ENCODE measurements at regions of chr3 and their contacts with region 1.

Region 1: GRCh38 chr3:157081681-157082210 is 78.2 kb downstream of the CCNL1 start:
- DNase-seq: peak; percentile 70
- CTCF ChIP-seq: peak; percentile 92

Region 2: GRCh38 chr3:156535162-156535627 is 546.6 kb before region 1 on chr3:
- in situ Hi-C with region 1: loop called (anchors 25 kb)
- DNase-seq: no peak
- CTCF ChIP-seq: no peak

Region 3: DNA sequence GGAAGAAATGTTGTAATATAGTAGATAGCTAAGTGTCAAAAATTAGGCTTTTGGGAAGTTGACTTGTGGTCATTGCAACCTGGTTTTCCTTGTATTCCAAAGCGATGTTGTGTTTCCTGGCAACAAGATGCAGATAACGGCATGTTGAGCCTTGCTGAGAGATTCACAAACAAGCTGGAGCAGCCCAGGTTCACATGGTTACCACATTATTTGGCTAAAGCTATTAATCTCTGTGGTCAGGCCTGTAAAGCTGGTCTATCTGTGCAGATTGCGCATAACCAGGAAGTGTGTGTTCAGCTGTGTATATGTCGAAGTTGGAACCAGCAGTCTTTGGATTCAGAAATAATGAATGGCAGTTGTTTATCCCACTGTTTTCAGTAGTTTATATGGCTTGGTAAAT is 400.7 kb before region 1 on chr3:
- in situ Hi-C with region 1: loop called (anchors 10 kb)
- DNase-seq: peak; percentile 33
- CTCF ChIP-seq: no peak

Region 4: DNA sequence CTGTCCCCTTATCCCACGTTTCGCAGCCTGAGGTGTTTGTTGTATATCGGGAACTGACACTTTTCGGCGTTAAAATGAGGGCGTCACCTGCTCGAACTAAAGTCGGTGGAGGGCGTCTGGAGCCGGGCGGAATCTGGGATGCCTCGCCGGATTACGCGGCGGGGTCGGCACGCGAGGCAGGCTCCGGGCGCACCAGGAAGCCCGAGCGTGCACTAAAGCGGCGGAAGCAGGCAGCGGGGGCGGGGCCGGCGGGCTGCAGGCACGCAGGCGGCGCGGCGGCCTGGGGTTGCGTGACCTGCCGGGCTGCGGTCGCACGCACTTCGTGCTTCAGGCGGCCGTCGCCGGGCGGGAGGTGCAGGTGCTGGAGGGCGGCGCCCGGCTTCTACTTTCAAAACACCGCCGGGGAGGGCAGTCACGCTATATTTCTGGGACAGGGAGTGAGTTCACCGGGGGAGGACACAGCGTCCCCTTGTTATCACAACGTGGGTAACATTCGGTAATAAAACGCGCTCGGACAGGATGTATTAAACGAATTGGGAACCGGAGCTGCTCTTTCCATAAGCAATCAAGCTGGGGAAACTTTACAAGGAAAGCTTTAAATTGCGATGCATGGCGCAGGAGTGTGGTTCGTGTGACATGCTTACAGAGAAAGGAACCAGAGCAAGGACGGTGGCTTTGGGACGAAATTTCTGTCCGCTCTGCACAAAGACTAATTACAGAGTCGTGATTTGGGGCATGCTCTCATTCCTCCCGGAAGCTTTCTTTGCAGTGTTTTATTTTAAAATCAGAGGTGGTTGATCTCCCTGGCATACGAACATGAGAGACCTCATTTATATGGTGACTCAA is 264.7 kb before region 1 on chr3:
- in situ Hi-C with region 1: loop called (anchors 5 kb)
- DNase-seq: peak; percentile 86
- CTCF ChIP-seq: peak; percentile 26

Region 5: GRCh38 chr3:156888176-156888575 is 193.6 kb before region 1 on chr3:
- in situ Hi-C with region 1: no loop called
- DNase-seq: no peak
- CTCF ChIP-seq: no peak

Region 6: DNA sequence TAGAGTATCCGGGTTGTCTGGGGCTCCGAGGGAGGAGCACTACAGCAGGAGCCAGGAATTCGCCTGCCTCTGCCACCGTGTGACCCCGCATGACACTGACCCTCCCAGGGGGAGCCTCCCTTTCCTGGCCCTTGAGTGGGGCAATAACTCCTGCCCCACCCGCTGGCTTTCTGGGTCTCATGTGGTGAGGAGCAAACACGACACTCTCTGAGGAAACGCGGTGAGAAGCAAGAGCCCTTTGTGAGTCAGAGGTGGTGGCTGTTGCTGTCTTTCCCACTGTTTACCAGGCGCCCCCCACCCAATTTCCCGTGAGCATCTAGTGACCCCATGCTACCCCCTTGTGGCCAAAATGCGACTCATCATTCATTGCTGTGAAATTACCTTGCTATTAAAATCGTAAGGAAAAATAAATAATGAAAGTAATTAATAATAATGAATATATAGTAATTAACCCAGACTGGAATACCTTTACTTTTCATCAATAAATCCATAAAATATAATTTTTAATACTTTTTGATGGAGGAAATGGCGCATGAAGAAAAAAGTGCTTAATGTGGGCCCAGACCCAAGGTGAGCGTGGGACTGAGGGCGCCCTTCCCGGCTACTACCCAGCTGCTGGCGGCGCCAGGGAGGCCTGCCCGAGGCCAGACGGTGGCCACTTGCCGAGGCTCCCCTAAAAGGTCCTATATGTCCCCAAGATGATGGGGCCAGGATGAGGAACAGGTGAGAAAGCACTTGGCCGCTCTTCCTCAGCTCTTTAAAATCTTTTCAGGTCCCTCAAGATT is 48.9 kb after region 1 on chr3:
- in situ Hi-C with region 1: loop called (anchors 10 kb)
- DNase-seq: peak; percentile 39
- CTCF ChIP-seq: peak; percentile 67